B cell (primary cell): ENCODE measurements at regions of chr6 and their contacts with region 1.

Region 1: GRCh38 chr6:135880066-135880972 is 28.8 kb downstream of the PDE7B start:
- DNase-seq: peak; percentile 75
- ATAC-seq: peak; percentile 90
- H3K4me3 ChIP-seq: peak overlapping the region; percentile 14 to 64 (median 36)
- H3K4me3 Mint-ChIP-seq: peak overlapping the region; percentile 84
- H3K27ac ChIP-seq: peak overlapping the region; percentile 91 to 99
- H3K27ac Mint-ChIP-seq: peak overlapping the region; percentile 98
- H3K4me1 ChIP-seq: peaks cover 35% of the 10 kb centered on the region in 2 donors
- H3K4me1 Mint-ChIP-seq: peaks cover 49% of the 10 kb centered on the region
- H3K27me3 ChIP-seq: no peaks in the 10 kb centered on the region
- H3K27me3 Mint-ChIP-seq: no peaks in the 10 kb centered on the region
- CTCF ChIP-seq: no peak

Region 2: DNA sequence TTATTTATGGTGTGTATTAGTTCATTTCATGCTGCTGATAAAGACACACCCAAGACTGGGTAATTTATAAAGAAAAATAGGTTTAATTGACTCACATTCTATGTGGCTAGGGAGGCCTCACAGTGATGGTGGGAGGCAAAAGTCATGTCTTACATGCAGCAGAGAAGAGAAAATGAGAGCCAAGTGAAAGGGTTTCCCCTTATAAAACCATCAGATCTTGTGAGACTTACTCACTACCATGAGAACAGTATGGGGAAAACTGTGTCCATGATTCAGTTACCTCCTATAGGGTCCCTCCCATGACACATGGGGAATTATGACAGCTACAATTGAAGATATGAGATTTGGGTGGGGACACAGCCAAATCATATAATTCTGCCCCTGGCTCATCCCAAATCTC is 232.8 kb before region 1 on chr6:
- CTCF ChIA-PET with region 1: no interaction called
- POLR2A ChIA-PET with region 1: no interaction called
- intact Hi-C with region 1: no loop called
- DNase-seq: no peak
- ATAC-seq: no peak
- H3K4me3 ChIP-seq: no peak overlapping the region
- H3K4me3 Mint-ChIP-seq: no peak overlapping the region
- H3K27ac ChIP-seq: no peak overlapping the region
- H3K27ac Mint-ChIP-seq: no peak overlapping the region
- H3K4me1 ChIP-seq: peaks cover 7 to 13% of the 10 kb centered on the region in 2 donors
- H3K4me1 Mint-ChIP-seq: peaks cover 18% of the 10 kb centered on the region
- H3K27me3 ChIP-seq: no peaks in the 10 kb centered on the region
- H3K27me3 Mint-ChIP-seq: no peaks in the 10 kb centered on the region
- CTCF ChIP-seq: no peak

Region 3: GRCh38 chr6:135801755-135802465 is 78.4 kb before region 1 on chr6:
- CTCF ChIA-PET with region 1: no interaction called
- POLR2A ChIA-PET with region 1: no interaction called
- intact Hi-C with region 1: no loop called
- DNase-seq: no peak
- ATAC-seq: no peak
- H3K4me3 ChIP-seq: no peak overlapping the region
- H3K4me3 Mint-ChIP-seq: no peak overlapping the region
- H3K27ac ChIP-seq: no peak overlapping the region
- H3K27ac Mint-ChIP-seq: no peak overlapping the region
- H3K4me1 ChIP-seq: no peaks in the 10 kb centered on the region
- H3K4me1 Mint-ChIP-seq: peaks cover 7% of the 10 kb centered on the region
- H3K27me3 ChIP-seq: no peaks in the 10 kb centered on the region
- H3K27me3 Mint-ChIP-seq: peaks cover 5% of the 10 kb centered on the region
- CTCF ChIP-seq: no peak

Region 4: GRCh38 chr6:135823851-135824250 is 56.5 kb before region 1 on chr6:
- CTCF ChIA-PET with region 1: no interaction called
- POLR2A ChIA-PET with region 1: no interaction called
- intact Hi-C with region 1: no loop called
- DNase-seq: no peak
- ATAC-seq: no peak
- H3K4me3 ChIP-seq: no peak overlapping the region
- H3K4me3 Mint-ChIP-seq: no peak overlapping the region
- H3K27ac ChIP-seq: no peak overlapping the region
- H3K27ac Mint-ChIP-seq: no peak overlapping the region
- H3K4me1 ChIP-seq: peaks cover 0 to 4% of the 10 kb centered on the region in 2 donors
- H3K4me1 Mint-ChIP-seq: peaks cover 6% of the 10 kb centered on the region
- H3K27me3 ChIP-seq: no peaks in the 10 kb centered on the region
- H3K27me3 Mint-ChIP-seq: peaks cover 12% of the 10 kb centered on the region
- CTCF ChIP-seq: no peak

Region 5: GRCh38 chr6:135851442-135852271 is 28.7 kb before region 1 on chr6 and contains the start of gene PDE7B:
- CTCF ChIA-PET with region 1: interaction called, 5 read pairs
- POLR2A ChIA-PET with region 1: interaction called, 4 read pairs
- intact Hi-C with region 1: loop called (anchors 1 kb)
- DNase-seq: peak; percentile 86
- ATAC-seq: peak; percentile 99
- H3K4me3 ChIP-seq: peak within 1 kb of the TSS; percentile 40 to 82 (median 67)
- H3K4me3 Mint-ChIP-seq: peak within 1 kb of the TSS; percentile 87
- H3K27ac ChIP-seq: peak within 1 kb of the TSS; percentile 64 to 85
- H3K27ac Mint-ChIP-seq: peak within 1 kb of the TSS; percentile 79
- H3K4me1 ChIP-seq: peaks cover 17 to 40% of the 10 kb centered on the region in 2 donors
- H3K4me1 Mint-ChIP-seq: peaks cover 48% of the 10 kb centered on the region
- H3K27me3 ChIP-seq: no peaks in the 10 kb centered on the region
- H3K27me3 Mint-ChIP-seq: no peaks in the 10 kb centered on the region
- CTCF ChIP-seq: no peak
- total RNA-seq, gene PDE7B: 7.5 and 9.2 TPM in 2 replicates

Region 6: GRCh38 chr6:135866445-135867123 is 13.7 kb before region 1 on chr6:
- CTCF ChIA-PET with region 1: no interaction called
- POLR2A ChIA-PET with region 1: interaction called, 4 read pairs
- intact Hi-C with region 1: loop called (anchors 2 kb)
- DNase-seq: no peak
- ATAC-seq: no peak
- H3K4me3 ChIP-seq: no peak overlapping the region
- H3K4me3 Mint-ChIP-seq: no peak overlapping the region
- H3K27ac ChIP-seq: no peak overlapping the region
- H3K27ac Mint-ChIP-seq: no peak overlapping the region
- H3K4me1 ChIP-seq: peaks cover 0 to 6% of the 10 kb centered on the region in 2 donors
- H3K4me1 Mint-ChIP-seq: peaks cover 4% of the 10 kb centered on the region
- H3K27me3 ChIP-seq: no peaks in the 10 kb centered on the region
- H3K27me3 Mint-ChIP-seq: no peaks in the 10 kb centered on the region
- CTCF ChIP-seq: no peak

Region 7: DNA sequence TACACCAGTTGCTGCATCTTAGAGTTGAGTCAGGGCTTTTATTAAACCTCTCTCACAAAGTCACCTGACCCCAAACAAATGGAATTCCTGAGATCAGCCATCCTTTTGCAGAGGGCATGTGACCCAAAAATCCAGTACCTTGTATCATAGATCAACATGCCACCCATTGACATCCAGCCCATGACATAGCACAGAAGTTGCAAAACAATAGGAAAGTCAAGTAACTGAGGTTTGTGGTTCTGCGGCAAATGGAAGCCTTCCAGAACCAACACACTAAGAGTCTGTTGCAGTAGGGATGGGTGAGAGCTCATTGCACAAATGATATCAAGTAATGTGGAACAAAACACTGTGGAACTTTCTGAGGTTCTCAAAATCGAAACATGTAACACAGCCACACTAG is 82.4 kb after region 1 on chr6:
- CTCF ChIA-PET with region 1: no interaction called
- POLR2A ChIA-PET with region 1: no interaction called
- intact Hi-C with region 1: no loop called
- DNase-seq: no peak
- ATAC-seq: no peak
- H3K4me3 ChIP-seq: no peak overlapping the region
- H3K4me3 Mint-ChIP-seq: no peak overlapping the region
- H3K27ac ChIP-seq: no peak overlapping the region
- H3K27ac Mint-ChIP-seq: no peak overlapping the region
- H3K4me1 ChIP-seq: no peaks in the 10 kb centered on the region
- H3K4me1 Mint-ChIP-seq: no peaks in the 10 kb centered on the region
- H3K27me3 ChIP-seq: no peaks in the 10 kb centered on the region
- H3K27me3 Mint-ChIP-seq: no peaks in the 10 kb centered on the region
- CTCF ChIP-seq: no peak